ENCODE measurements at regions of chr14 and their contacts with region 1.

Region 1: DNA sequence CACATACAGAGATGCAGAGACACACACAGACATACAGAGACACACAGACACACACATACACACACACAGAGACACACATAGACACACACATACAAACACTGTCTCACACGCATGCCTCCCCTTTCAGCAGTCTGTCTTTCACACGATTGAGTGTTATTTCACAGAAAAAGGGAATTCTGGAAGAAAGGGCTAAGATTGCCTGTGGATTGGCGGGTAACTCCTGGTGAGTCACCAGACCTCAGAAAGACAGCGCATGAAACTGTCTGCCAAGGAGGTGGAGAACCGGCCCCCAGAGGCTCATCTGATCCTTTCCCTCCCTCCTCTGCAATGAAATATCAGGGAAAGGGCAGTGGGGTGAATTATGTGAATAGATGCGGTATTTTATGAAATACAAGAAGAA is 127.2 kb upstream of the GSC start:
- DNase-seq: peak; percentile 4
- H3K4me3 ChIP-seq: no peak overlapping the region
- CTCF ChIP-seq: no peak

Region 2: GRCh38 chr14:94960285-94960996 is 63.4 kb after region 1 on chr14:
- in situ Hi-C with region 1: loop called (anchors 5 kb)
- DNase-seq: no peak
- H3K4me3 ChIP-seq: no peak overlapping the region
- CTCF ChIP-seq: no peak